ENCODE measurements at regions of chr2 and their contacts with region 1.

Region 1: GRCh38 chr2:224284134-224284946 is 117.6 kb downstream of the FAM124B start:
- DNase-seq: peak; percentile 75
- H3K4me3 ChIP-seq: no peak overlapping the region
- H3K27ac ChIP-seq: peak overlapping the region; percentile 15
- H3K4me1 ChIP-seq: peaks cover 48% of the 10 kb centered on the region
- H3K27me3 ChIP-seq: no peaks in the 10 kb centered on the region
- CTCF ChIP-seq: peak; percentile 68

Region 2: GRCh38 chr2:223811757-223812156 is 472.6 kb before region 1 on chr2:
- CTCF ChIA-PET with region 1: no interaction called
- POLR2A ChIA-PET with region 1: no interaction called
- intact Hi-C with region 1: no loop called
- DNase-seq: no peak
- H3K4me3 ChIP-seq: no peak overlapping the region
- H3K27ac ChIP-seq: no peak overlapping the region
- H3K4me1 ChIP-seq: peaks cover 13% of the 10 kb centered on the region
- H3K27me3 ChIP-seq: no peaks in the 10 kb centered on the region
- CTCF ChIP-seq: no peak

Region 3: GRCh38 chr2:224039124-224039940 is 245.0 kb before region 1 on chr2 and contains the start of gene SERPINE2:
- CTCF ChIA-PET with region 1: interaction called, 3 read pairs
- POLR2A ChIA-PET with region 1: no interaction called
- intact Hi-C with region 1: loop called (anchors 2 kb)
- DNase-seq: peak; percentile 89
- H3K4me3 ChIP-seq: peak within 1 kb of the TSS; percentile 87
- H3K27ac ChIP-seq: peak within 1 kb of the TSS; percentile 68
- H3K4me1 ChIP-seq: peaks cover 45% of the 10 kb centered on the region
- H3K27me3 ChIP-seq: no peaks in the 10 kb centered on the region
- CTCF ChIP-seq: peak; percentile 52
- total RNA-seq, gene SERPINE2: 331 and 380 TPM in 2 replicates

Region 4: DNA sequence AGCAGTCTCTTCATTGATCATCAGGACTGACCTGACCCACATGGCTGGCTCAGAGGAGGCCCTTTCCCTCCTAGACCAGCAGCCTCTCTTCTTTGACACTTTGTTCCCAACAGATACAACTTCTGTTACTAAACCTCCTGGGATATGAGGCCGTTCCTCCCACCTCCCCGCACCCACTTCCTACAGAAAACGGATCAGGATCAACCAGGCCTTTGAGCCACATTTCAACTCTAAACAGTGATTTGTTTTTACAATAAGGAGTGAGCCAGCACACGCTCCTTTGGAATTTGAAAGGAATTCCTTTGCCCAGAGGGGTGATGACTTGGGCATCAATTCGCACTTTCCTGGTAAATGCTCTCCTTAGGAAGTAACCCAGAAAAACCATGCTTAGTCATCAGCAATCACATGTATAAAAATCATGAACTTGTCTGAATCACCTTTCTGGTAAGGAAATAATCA is 62.9 kb before region 1 on chr2:
- CTCF ChIA-PET with region 1: no interaction called
- POLR2A ChIA-PET with region 1: no interaction called
- intact Hi-C with region 1: loop called (anchors 2 kb)
- DNase-seq: peak; percentile 22
- H3K4me3 ChIP-seq: no peak overlapping the region
- H3K27ac ChIP-seq: no peak overlapping the region
- H3K4me1 ChIP-seq: peaks cover 35% of the 10 kb centered on the region
- H3K27me3 ChIP-seq: no peaks in the 10 kb centered on the region
- CTCF ChIP-seq: no peak

Region 5: GRCh38 chr2:225814554-225814953 is 1530.2 kb after region 1 on chr2:
- CTCF ChIA-PET with region 1: no interaction called
- POLR2A ChIA-PET with region 1: no interaction called
- intact Hi-C with region 1: no loop called
- DNase-seq: no peak
- H3K4me3 ChIP-seq: no peak overlapping the region
- H3K27ac ChIP-seq: no peak overlapping the region
- H3K4me1 ChIP-seq: no peaks in the 10 kb centered on the region
- H3K27me3 ChIP-seq: no peaks in the 10 kb centered on the region
- CTCF ChIP-seq: no peak